ENCODE measurements at regions of chr17 and their contacts with region 1.

Region 1: DNA sequence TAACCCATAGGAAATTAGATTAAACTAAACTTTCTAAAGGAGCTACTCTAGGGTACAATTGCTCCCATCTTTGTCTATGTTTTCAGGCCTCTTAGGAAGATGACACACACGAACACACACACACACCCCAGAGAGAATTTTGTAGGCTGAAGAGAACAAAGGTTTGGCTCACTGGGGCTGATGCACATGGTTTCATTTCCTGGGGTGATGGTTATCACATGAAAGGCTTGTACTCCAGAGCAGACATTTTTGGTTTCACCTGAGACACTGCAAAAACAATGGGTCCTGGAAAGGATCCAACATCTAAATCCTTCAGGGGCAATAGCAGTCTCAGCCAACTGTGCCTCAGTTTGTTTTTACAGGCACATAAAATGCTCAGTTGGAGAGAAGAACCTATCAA is 62.8 kb downstream of the GRB7 start:
- DNase-seq: peak in 34 of 35 experiments; percentile 25 to 83 (median 50)
- ATAC-seq: peak; percentile 99 to 100 (median 100)
- H3K4me3 ChIP-seq: no peak overlapping the region
- H3K4me3 Mint-ChIP-seq: peak overlapping the region; percentile 22 to 69 (median 31)
- H3K27ac ChIP-seq: peak overlapping the region; percentile 76
- H3K27ac Mint-ChIP-seq: peak overlapping the region; percentile 85 to 95
- H3K4me1 ChIP-seq: peaks cover 36 to 45% of the 10 kb centered on the region in 2 experiments
- H3K4me1 Mint-ChIP-seq: peaks cover 63 to 70% (median 66%) of the 10 kb centered on the region in 3 donors
- H3K27me3 ChIP-seq: no peaks in the 10 kb centered on the region
- H3K27me3 Mint-ChIP-seq: no peaks in the 10 kb centered on the region

Region 2: GRCh38 chr17:39653662-39654331 is 146.7 kb before region 1 on chr17:
- CTCF ChIA-PET with region 1: no interaction called
- POLR2A ChIA-PET with region 1: no interaction called
- DNase-seq: peak; percentile 40 to 85 (median 75)
- ATAC-seq: peak; percentile 61 to 74 (median 66)
- H3K4me3 ChIP-seq: no peak overlapping the region
- H3K4me3 Mint-ChIP-seq: no peak overlapping the region
- H3K27ac ChIP-seq: no peak overlapping the region
- H3K27ac Mint-ChIP-seq: peak overlapping the region in 1 of 2 donors; percentile 34
- H3K4me1 ChIP-seq: peaks cover 5 to 45% of the 10 kb centered on the region in 2 experiments
- H3K4me1 Mint-ChIP-seq: peaks cover 53 to 67% (median 61%) of the 10 kb centered on the region in 3 donors
- H3K27me3 ChIP-seq: no peaks in the 10 kb centered on the region
- H3K27me3 Mint-ChIP-seq: no peaks in the 10 kb centered on the region

Region 3: DNA sequence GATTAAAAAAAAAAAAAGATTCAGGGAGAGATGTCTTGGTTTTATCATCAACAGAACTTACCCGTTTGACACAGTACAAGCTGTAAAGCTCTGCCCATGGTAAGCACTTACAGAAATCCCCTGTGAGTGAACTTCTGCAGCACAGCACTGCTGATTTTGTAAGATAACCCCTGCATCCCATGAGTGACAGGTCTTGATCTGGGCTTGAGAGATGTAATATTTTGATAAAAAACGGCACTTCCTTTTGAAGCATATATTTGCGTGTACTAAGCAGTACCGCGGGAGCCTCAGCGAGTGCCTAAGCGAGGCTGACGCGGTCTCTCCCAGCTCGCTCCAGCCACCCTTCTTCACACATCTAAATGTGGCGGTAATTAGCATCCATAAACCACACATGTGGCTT is 13.1 kb after region 1 on chr17:
- CTCF ChIA-PET with region 1: interaction called, 3 to 12 read pairs
- POLR2A ChIA-PET with region 1: no interaction called
- DNase-seq: peak; percentile 18 to 92 (median 65)
- ATAC-seq: peak; percentile 88 to 97 (median 94)
- H3K4me3 ChIP-seq: peak overlapping the region; percentile 30 to 46
- H3K4me3 Mint-ChIP-seq: peak overlapping the region; percentile 66 to 81 (median 75)
- H3K27ac ChIP-seq: peak overlapping the region; percentile 87
- H3K27ac Mint-ChIP-seq: peak overlapping the region; percentile 96 to 97
- H3K4me1 ChIP-seq: peaks cover 38 to 45% of the 10 kb centered on the region in 2 experiments
- H3K4me1 Mint-ChIP-seq: peaks cover 60 to 83% (median 80%) of the 10 kb centered on the region in 3 donors
- H3K27me3 ChIP-seq: no peaks in the 10 kb centered on the region
- H3K27me3 Mint-ChIP-seq: no peaks in the 10 kb centered on the region

Region 4: DNA sequence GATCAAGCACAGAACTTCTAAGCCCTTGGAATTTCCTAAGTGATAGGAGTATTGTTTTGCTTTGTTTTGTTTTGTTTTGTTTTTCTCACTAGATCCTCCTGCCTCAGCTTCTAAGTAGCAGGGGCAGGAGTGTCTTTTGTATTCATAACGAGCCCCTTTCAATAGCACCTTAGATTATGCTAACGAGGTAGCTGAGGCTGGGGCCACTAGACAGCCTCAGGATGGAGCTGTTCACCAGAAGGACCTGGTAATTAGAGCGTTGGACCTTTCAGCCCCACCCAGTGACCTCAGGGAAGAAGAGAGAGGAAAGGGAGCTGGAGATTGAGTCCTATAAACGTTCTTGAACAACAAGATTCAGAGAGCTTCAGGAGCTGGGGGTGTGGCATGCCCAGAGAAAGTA is 20.0 kb after region 1 on chr17:
- CTCF ChIA-PET with region 1: interaction called in 1 of 2 experiments, 3 read pairs
- POLR2A ChIA-PET with region 1: interaction called in 1 of 2 experiments, 10 read pairs
- DNase-seq: no peak
- ATAC-seq: no peak
- H3K4me3 ChIP-seq: no peak overlapping the region
- H3K4me3 Mint-ChIP-seq: peak overlapping the region; percentile 17 to 59 (median 28)
- H3K27ac ChIP-seq: peak overlapping the region; percentile 84
- H3K27ac Mint-ChIP-seq: peak overlapping the region; percentile 93 to 99
- H3K4me1 ChIP-seq: peaks cover 33 to 37% of the 10 kb centered on the region in 2 experiments
- H3K4me1 Mint-ChIP-seq: peaks cover 45 to 63% (median 63%) of the 10 kb centered on the region in 3 donors
- H3K27me3 ChIP-seq: no peaks in the 10 kb centered on the region
- H3K27me3 Mint-ChIP-seq: no peaks in the 10 kb centered on the region

Region 5: DNA sequence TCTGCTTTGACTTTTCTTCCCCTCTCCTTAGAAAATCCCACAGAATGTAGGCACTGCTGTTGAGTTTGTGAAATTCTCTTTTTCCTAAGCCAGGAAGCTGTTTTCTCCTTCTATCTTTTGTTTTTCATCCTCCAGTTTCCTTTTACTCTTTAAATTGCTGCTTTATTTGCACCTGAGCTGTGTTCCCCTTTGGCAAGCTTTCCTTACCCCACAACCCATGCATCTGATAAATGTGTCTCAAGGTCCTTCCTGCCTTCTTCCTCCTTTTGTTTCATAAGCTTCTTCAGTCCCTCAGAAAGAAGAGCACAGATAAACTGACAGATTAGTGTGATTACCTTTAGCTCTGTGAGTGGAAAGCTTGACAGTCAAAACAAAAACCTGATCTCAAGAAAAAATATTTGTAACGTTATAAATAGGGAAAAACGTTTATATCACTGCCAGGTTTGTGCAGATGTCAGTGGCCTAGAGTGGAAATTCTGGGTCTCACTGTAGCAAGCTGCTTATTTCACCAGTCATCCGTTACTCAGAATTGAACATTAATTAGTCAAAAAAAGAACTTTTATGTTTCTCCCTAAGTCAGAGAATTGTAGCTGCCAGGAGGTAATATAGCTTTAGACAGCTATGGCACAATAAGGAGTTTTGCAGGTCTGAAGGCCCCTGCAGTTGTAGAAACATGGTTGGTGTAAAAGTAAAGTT is 94.3 kb after region 1 on chr17:
- CTCF ChIA-PET with region 1: no interaction called
- POLR2A ChIA-PET with region 1: no interaction called
- DNase-seq: no peak
- ATAC-seq: no peak
- H3K4me3 ChIP-seq: no peak overlapping the region
- H3K4me3 Mint-ChIP-seq: no peak overlapping the region
- H3K27ac ChIP-seq: no peak overlapping the region
- H3K27ac Mint-ChIP-seq: peak overlapping the region; percentile 74 to 81
- H3K4me1 ChIP-seq: no peaks in the 10 kb centered on the region
- H3K4me1 Mint-ChIP-seq: peaks cover 5 to 9% (median 7%) of the 10 kb centered on the region in 3 donors
- H3K27me3 ChIP-seq: peaks cover 0 to 2% of the 10 kb centered on the region in 2 experiments
- H3K27me3 Mint-ChIP-seq: no peaks in the 10 kb centered on the region